Caco-2 (cell line): ENCODE measurements at regions of chr1 and their contacts with region 1.

Region 1: GRCh38 chr1:178031856-178032320 is 62.0 kb upstream of the RASAL2 start:
- DNase-seq: peak; percentile 80 to 83
- H3K4me3 ChIP-seq: no peak overlapping the region
- H3K4me3 Mint-ChIP-seq: no peak overlapping the region
- H3K27ac Mint-ChIP-seq: no peak overlapping the region
- H3K4me1 ChIP-seq: peaks cover 29% of the 10 kb centered on the region
- H3K4me1 Mint-ChIP-seq: peaks cover 13% of the 10 kb centered on the region
- H3K27me3 ChIP-seq: no peaks in the 10 kb centered on the region
- H3K27me3 Mint-ChIP-seq: no peaks in the 10 kb centered on the region
- CTCF ChIP-seq: peak; percentile 76 to 91

Region 2: GRCh38 chr1:178055779-178056471 is 24.0 kb after region 1 on chr1:
- CTCF ChIA-PET with region 1: interaction called, 13 read pairs
- POLR2A ChIA-PET with region 1: interaction called, 5 read pairs
- intact Hi-C with region 1: loop called (anchors 1 kb)
- DNase-seq: peak; percentile 37 to 44
- H3K4me3 ChIP-seq: no peak overlapping the region
- H3K4me3 Mint-ChIP-seq: no peak overlapping the region
- H3K27ac Mint-ChIP-seq: peak overlapping the region; percentile 1
- H3K4me1 ChIP-seq: peaks cover 14% of the 10 kb centered on the region
- H3K4me1 Mint-ChIP-seq: peaks cover 26% of the 10 kb centered on the region
- H3K27me3 ChIP-seq: no peaks in the 10 kb centered on the region
- H3K27me3 Mint-ChIP-seq: no peaks in the 10 kb centered on the region
- CTCF ChIP-seq: peak in 1 of 2 experiments; percentile 39

Region 3: GRCh38 chr1:178189814-178190213 is 157.9 kb after region 1 on chr1:
- CTCF ChIA-PET with region 1: interaction called, 12 read pairs
- POLR2A ChIA-PET with region 1: no interaction called
- intact Hi-C with region 1: loop called (anchors 1 kb)
- DNase-seq: peak; percentile 60 to 62
- H3K4me3 ChIP-seq: no peak overlapping the region
- H3K4me3 Mint-ChIP-seq: no peak overlapping the region
- H3K27ac Mint-ChIP-seq: no peak overlapping the region
- H3K4me1 ChIP-seq: peaks cover 10% of the 10 kb centered on the region
- H3K4me1 Mint-ChIP-seq: peaks cover 19% of the 10 kb centered on the region
- H3K27me3 ChIP-seq: no peaks in the 10 kb centered on the region
- H3K27me3 Mint-ChIP-seq: no peaks in the 10 kb centered on the region
- CTCF ChIP-seq: peak; percentile 72 to 77

Region 4: GRCh38 chr1:178282949-178283367 is 251.1 kb after region 1 on chr1:
- CTCF ChIA-PET with region 1: no interaction called
- POLR2A ChIA-PET with region 1: no interaction called
- intact Hi-C with region 1: loop called (anchors 1 kb)
- DNase-seq: no peak
- H3K4me3 ChIP-seq: no peak overlapping the region
- H3K4me3 Mint-ChIP-seq: no peak overlapping the region
- H3K27ac Mint-ChIP-seq: no peak overlapping the region
- H3K4me1 ChIP-seq: peaks cover 2% of the 10 kb centered on the region; the same call in 1 of the 2 replicates
- H3K4me1 Mint-ChIP-seq: peaks cover 20% of the 10 kb centered on the region
- H3K27me3 ChIP-seq: no peaks in the 10 kb centered on the region
- H3K27me3 Mint-ChIP-seq: no peaks in the 10 kb centered on the region
- CTCF ChIP-seq: peak in 1 of 2 experiments; percentile 45